A673 (cell line): ENCODE measurements at regions of chr6 and their contacts with region 1.

Region 1: GRCh38 chr6:137313928-137314855 is 95.0 kb upstream of the IFNGR1 start:
- DNase-seq: peak; percentile 82
- H3K4me3 ChIP-seq: no peak overlapping the region
- H3K27ac ChIP-seq: no peak overlapping the region
- H3K4me1 ChIP-seq: peaks cover 10% of the 10 kb centered on the region
- H3K27me3 ChIP-seq: no peaks in the 10 kb centered on the region
- CTCF ChIP-seq: peak; percentile 92

Region 2: GRCh38 chr6:136840276-136841001 is 473.8 kb before region 1 on chr6:
- CTCF ChIA-PET with region 1: no interaction called
- POLR2A ChIA-PET with region 1: no interaction called
- intact Hi-C with region 1: loop called (anchors 5 kb)
- DNase-seq: no peak
- H3K4me3 ChIP-seq: no peak overlapping the region
- H3K27ac ChIP-seq: no peak overlapping the region
- H3K4me1 ChIP-seq: no peaks in the 10 kb centered on the region
- H3K27me3 ChIP-seq: no peaks in the 10 kb centered on the region
- CTCF ChIP-seq: no peak

Region 3: DNA sequence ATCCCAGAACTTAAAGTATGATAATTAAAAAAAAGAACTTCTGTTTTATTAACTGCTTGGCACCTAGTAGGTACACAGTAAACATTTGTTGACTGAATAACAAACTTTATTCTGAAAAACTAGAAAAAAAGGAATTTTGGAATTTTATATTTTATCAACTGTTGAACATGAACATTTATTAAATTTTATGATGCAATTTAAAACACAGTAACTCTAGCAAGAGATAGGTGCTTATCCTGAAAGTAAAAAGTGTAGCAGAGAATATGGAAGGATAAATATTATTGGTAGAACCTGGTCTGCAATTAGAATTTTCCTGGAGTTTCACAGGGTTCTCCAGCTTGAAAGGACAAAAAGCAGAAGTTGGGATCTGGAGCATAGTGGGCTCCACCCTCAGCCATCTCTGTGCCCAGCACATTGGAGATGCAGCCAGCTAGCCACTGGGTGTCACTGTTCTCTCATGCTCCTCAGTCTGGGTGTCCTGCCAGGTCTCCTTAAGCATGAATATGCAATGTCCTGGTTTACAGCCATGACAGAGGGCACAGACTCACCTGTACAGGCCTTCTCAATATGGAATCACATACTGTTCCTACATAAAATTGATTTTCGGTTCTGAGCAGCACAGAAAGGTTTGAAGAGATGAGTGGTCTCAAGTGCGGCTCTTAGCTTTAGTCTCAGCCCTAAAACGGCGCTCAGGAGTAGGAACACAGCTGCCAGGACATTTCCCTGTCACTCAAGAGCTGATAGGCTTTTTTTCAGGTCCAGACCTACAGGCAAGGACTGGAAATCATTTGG is 237.7 kb before region 1 on chr6:
- CTCF ChIA-PET with region 1: interaction called, 9 read pairs
- POLR2A ChIA-PET with region 1: no interaction called
- intact Hi-C with region 1: loop called (anchors 5 kb)
- DNase-seq: peak; percentile 70
- H3K4me3 ChIP-seq: no peak overlapping the region
- H3K27ac ChIP-seq: no peak overlapping the region
- H3K4me1 ChIP-seq: no peaks in the 10 kb centered on the region
- H3K27me3 ChIP-seq: no peaks in the 10 kb centered on the region
- CTCF ChIP-seq: peak; percentile 87

Region 4: DNA sequence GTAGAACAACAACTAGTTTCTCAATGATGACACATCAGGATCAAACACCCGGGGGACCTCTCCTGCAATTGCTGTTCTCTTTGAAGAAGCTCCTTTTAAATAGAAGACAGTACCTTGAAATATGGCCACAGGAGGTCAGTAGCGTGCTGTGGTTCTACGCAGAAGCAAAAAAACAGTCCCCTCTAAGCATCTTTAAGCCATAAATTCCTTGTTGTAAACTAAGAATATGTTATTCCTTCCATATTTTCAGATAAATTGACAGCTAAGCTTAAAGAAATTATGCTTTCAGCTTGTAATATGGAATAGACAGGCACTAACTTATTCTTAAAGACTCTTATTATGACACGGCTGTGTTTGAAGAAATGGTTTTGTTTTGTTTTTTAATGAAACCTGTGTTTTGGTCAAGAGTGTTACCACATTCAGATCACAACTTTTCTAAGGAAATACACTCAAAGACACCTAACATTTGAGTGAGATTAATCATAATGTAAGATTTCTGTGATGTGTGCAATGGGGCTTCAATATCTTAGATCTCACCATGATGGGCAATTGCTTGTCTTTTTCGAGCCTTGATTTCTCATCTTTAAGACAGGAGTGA is 219.7 kb before region 1 on chr6:
- CTCF ChIA-PET with region 1: interaction called, 13 read pairs
- POLR2A ChIA-PET with region 1: no interaction called
- intact Hi-C with region 1: loop called (anchors 2 kb)
- DNase-seq: peak; percentile 67
- H3K4me3 ChIP-seq: no peak overlapping the region
- H3K27ac ChIP-seq: no peak overlapping the region
- H3K4me1 ChIP-seq: no peaks in the 10 kb centered on the region
- H3K27me3 ChIP-seq: no peaks in the 10 kb centered on the region
- CTCF ChIP-seq: peak; percentile 68

Region 5: GRCh38 chr6:137271245-137272183 is 42.7 kb before region 1 on chr6:
- CTCF ChIA-PET with region 1: interaction called, 20 read pairs
- POLR2A ChIA-PET with region 1: no interaction called
- intact Hi-C with region 1: loop called (anchors 1 kb)
- DNase-seq: peak; percentile 56
- H3K4me3 ChIP-seq: no peak overlapping the region
- H3K27ac ChIP-seq: no peak overlapping the region
- H3K4me1 ChIP-seq: no peaks in the 10 kb centered on the region
- H3K27me3 ChIP-seq: peaks cover 4% of the 10 kb centered on the region
- CTCF ChIP-seq: peak; percentile 82